CD4-positive, alpha-beta memory T cell (primary cell): ENCODE measurements at regions of chr17 and their contacts with region 1.

Region 1: DNA sequence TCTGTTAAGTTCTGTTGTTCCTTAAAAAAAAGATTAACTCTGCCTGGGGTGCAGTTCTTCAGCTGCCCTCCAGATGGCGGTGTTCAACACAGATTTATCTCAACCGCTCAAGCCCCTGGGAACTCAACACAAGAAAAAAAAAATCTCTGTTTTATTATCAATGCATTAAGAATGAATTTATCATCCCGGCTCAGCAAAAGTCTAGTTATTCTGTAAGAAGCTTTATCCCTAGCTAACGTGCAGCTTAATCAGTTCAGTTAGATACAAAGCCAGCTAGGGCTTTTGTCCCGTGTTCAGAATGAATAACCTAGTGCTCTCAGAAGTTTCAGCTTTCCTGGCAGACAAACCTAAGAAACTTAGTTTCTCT is 475.9 kb upstream of the CCL2 start:
- DNase-seq: peak in 4 of 5 donors; percentile 18 to 32 (median 24)
- H3K4me3 ChIP-seq: no peak overlapping the region
- H3K4me3 Mint-ChIP-seq: no peak overlapping the region
- H3K27ac ChIP-seq: no peak overlapping the region
- H3K27ac Mint-ChIP-seq: no peak overlapping the region
- H3K4me1 ChIP-seq: no peaks in the 10 kb centered on the region
- H3K4me1 Mint-ChIP-seq: no peaks in the 10 kb centered on the region
- H3K27me3 ChIP-seq: no peaks in the 10 kb centered on the region
- H3K27me3 Mint-ChIP-seq: peaks cover 6 to 18% of the 10 kb centered on the region in 2 donors

Region 2: DNA sequence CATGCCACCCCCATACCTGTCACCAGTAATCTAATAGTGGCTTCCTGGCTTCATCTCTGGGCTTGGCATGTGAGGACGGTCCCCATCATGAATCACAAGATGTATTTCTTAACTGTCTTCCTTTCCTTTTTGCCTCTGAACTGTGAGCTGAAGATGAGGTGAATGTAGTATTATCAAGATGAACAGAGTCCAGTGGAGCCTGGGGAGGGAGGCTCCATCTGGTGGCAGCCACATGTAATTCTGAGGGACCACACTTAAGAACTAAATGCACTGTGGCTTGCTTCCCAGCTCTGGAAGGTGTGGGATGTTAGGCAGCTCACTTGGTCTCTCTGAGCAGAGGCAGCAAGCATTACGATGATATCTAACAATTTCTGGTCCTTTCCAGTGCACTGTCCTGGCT is 131.3 kb before region 1 on chr17:
- CTCF ChIA-PET with region 1: no interaction called
- POLR2A ChIA-PET with region 1: no interaction called
- intact Hi-C with region 1: no loop called
- DNase-seq: no peak
- H3K4me3 ChIP-seq: no peak overlapping the region
- H3K4me3 Mint-ChIP-seq: no peak overlapping the region
- H3K27ac ChIP-seq: no peak overlapping the region
- H3K27ac Mint-ChIP-seq: no peak overlapping the region
- H3K4me1 ChIP-seq: no peaks in the 10 kb centered on the region
- H3K4me1 Mint-ChIP-seq: peaks cover 0 to 2% (median 0%) of the 10 kb centered on the region in 4 donors
- H3K27me3 ChIP-seq: no peaks in the 10 kb centered on the region
- H3K27me3 Mint-ChIP-seq: peaks cover 10 to 12% of the 10 kb centered on the region in 2 donors

Region 3: GRCh38 chr17:33769066-33769465 is 10.1 kb before region 1 on chr17:
- CTCF ChIA-PET with region 1: interaction called, 15 read pairs
- POLR2A ChIA-PET with region 1: no interaction called
- intact Hi-C with region 1: no loop called
- DNase-seq: no peak
- H3K4me3 ChIP-seq: no peak overlapping the region
- H3K4me3 Mint-ChIP-seq: no peak overlapping the region
- H3K27ac ChIP-seq: no peak overlapping the region
- H3K27ac Mint-ChIP-seq: no peak overlapping the region
- H3K4me1 ChIP-seq: no peaks in the 10 kb centered on the region
- H3K4me1 Mint-ChIP-seq: no peaks in the 10 kb centered on the region
- H3K27me3 ChIP-seq: no peaks in the 10 kb centered on the region
- H3K27me3 Mint-ChIP-seq: peaks cover 7 to 10% of the 10 kb centered on the region in 2 donors

Region 4: DNA sequence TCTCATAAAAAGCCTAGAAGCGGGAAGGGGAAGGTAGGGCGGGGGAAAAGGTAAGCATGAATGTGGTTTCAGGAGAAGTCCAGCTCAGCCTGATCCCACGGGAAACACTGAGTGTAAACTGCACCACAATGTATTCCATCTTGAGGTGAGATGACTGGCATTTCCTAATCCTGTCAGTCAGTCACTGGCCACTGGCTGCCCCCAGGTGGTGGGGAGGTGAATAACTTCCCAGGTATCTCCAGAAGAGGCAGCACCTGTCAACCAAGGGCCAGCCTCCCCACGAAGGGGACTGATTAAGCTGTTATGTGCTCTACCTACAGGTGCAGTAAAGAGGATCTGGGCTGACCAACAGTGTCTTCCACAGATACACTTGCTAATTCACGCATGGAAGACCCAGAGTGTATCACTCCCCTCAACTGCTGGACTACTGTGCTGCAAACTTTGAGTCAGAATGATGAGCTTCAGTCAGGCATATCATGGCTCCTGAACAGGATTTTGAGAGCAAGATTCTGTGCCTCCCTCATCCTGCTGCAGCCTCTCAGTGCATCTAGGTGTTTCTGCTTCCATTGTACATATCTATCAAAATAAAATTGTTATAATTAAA is 367.3 kb after region 1 on chr17:
- CTCF ChIA-PET with region 1: interaction called, 17 read pairs
- POLR2A ChIA-PET with region 1: no interaction called
- intact Hi-C with region 1: no loop called
- DNase-seq: peak; percentile 9 to 50 (median 30)
- H3K4me3 ChIP-seq: no peak overlapping the region
- H3K4me3 Mint-ChIP-seq: no peak overlapping the region
- H3K27ac ChIP-seq: no peak overlapping the region
- H3K27ac Mint-ChIP-seq: no peak overlapping the region
- H3K4me1 ChIP-seq: no peaks in the 10 kb centered on the region
- H3K4me1 Mint-ChIP-seq: no peaks in the 10 kb centered on the region
- H3K27me3 ChIP-seq: no peaks in the 10 kb centered on the region
- H3K27me3 Mint-ChIP-seq: peaks cover 10 to 11% of the 10 kb centered on the region in 2 donors